PC-3 (cell line): ENCODE measurements at regions of chr10 and their contacts with region 1.

Region 1: GRCh38 chr10:69800109-69800508 is 1.6 kb upstream of the COL13A1 start:
- DNase-seq: peak; percentile 93
- ATAC-seq: peak; percentile 26
- H3K4me3 ChIP-seq: no peak overlapping the region
- H3K27ac ChIP-seq: no peak overlapping the region
- H3K4me1 ChIP-seq: peaks cover 47% of the 10 kb centered on the region
- H3K27me3 ChIP-seq: no peaks in the 10 kb centered on the region
- CTCF ChIP-seq: peak; percentile 98

Region 2: GRCh38 chr10:69515699-69516259 is 284.3 kb before region 1 on chr10:
- CTCF ChIA-PET with region 1: interaction called, 3 read pairs
- POLR2A ChIA-PET with region 1: no interaction called
- intact Hi-C with region 1: loop called (anchors 5 kb)
- DNase-seq: peak; percentile 92
- ATAC-seq: peak; percentile 96
- H3K4me3 ChIP-seq: no peak overlapping the region
- H3K27ac ChIP-seq: no peak overlapping the region
- H3K4me1 ChIP-seq: no peaks in the 10 kb centered on the region
- H3K27me3 ChIP-seq: no peaks in the 10 kb centered on the region
- CTCF ChIP-seq: peak; percentile 98

Region 3: DNA sequence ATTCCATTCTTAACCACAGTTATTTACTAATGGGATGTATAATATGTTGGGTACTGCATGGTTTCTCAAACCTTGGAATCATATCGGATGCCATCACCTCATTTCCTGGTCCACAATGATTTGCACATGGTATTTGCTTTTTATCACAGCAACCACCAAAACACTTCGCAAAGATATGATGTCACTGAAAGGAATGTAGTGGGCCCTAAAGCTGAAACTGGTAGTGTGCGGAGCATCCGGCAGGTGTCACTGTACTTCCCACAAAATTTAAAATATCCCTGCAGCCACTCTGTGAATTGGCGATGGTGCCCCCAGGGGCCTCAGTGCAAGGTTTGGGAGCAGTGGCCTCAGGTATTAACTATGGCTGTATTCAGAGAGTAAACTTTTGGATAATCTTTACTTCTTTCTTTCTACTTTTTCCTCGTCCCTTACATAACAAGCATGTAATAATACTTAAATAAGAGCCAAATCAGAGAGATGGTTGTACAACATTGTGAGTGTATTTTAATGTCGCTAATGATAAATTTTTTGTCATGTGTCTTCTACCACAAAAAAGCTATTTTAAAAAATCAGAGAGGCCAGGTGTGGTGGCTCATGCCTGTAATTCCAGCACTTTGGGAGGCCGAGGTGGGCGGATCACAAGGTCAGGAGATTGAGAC is 103.9 kb before region 1 on chr10:
- CTCF ChIA-PET with region 1: no interaction called
- POLR2A ChIA-PET with region 1: no interaction called
- intact Hi-C with region 1: loop called (anchors 1 kb)
- DNase-seq: peak; percentile 98
- ATAC-seq: peak; percentile 94
- H3K4me3 ChIP-seq: no peak overlapping the region
- H3K27ac ChIP-seq: peak overlapping the region; percentile 17
- H3K4me1 ChIP-seq: peaks cover 7% of the 10 kb centered on the region
- H3K27me3 ChIP-seq: peaks cover 17% of the 10 kb centered on the region; the same call in 1 of the 2 replicates
- CTCF ChIP-seq: peak; percentile 98

Region 4: GRCh38 chr10:69769395-69769992 is 30.6 kb before region 1 on chr10:
- CTCF ChIA-PET with region 1: interaction called, 6 read pairs
- POLR2A ChIA-PET with region 1: no interaction called
- intact Hi-C with region 1: loop called (anchors 1 kb)
- DNase-seq: peak; percentile 89
- ATAC-seq: peak; percentile 99
- H3K4me3 ChIP-seq: peak overlapping the region; percentile 45
- H3K27ac ChIP-seq: no peak overlapping the region
- H3K4me1 ChIP-seq: peaks cover 14% of the 10 kb centered on the region
- H3K27me3 ChIP-seq: no peaks in the 10 kb centered on the region
- CTCF ChIP-seq: no peak

Region 5: DNA sequence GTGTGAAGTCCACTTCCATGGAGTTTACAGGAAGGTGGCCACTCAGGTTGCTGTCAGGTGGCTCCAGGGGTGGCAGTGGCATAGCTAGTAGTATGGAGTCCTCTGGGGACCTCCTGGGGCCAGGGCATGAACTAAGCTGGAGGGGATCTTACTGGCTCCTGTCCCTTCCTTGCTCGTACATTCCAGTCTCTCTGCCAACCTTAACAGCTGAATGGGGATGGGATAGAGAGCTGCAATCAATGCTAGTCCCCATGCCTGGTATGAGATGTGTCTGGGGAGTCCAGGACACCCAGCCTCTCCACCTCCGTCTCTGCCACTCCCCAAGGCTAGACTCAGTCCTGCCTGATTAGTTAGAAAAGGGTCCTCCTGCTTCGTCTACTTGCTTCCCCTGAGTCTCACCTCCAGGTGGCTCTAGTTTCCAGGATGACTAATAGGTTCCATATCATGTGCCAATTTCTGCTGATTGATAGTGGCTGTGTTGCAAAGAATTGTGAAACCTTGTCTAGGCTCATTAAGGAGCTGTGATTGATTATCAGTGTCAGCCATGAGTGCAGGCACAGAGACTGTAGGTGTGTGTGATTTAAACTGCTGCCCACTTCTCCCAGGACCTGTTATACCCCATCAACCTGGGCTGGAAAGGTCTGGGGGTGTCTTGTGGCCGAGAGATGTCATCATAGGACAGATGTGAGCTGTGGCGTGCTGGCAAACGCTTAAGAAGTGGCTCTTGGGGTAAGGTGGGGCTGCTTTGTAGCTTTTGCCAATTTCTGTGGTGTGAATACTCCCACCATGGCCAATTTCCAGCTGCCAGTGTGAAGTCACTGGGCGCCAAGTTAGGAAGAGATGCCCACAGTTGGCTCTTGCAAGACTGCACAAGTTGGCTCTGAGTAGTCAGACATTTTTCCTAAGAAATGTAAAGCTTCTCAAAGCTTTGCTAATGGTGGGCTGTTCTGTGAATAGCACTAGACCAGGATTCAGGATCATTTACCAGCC is 61.4 kb after region 1 on chr10:
- CTCF ChIA-PET with region 1: interaction called, 5 read pairs
- POLR2A ChIA-PET with region 1: no interaction called
- intact Hi-C with region 1: loop called (anchors 1 kb)
- DNase-seq: peak; percentile 99
- ATAC-seq: peak; percentile 38
- H3K4me3 ChIP-seq: no peak overlapping the region
- H3K27ac ChIP-seq: peak overlapping the region; percentile 95
- H3K4me1 ChIP-seq: peaks cover 63% of the 10 kb centered on the region
- H3K27me3 ChIP-seq: no peaks in the 10 kb centered on the region
- CTCF ChIP-seq: peak; percentile 92

Region 6: DNA sequence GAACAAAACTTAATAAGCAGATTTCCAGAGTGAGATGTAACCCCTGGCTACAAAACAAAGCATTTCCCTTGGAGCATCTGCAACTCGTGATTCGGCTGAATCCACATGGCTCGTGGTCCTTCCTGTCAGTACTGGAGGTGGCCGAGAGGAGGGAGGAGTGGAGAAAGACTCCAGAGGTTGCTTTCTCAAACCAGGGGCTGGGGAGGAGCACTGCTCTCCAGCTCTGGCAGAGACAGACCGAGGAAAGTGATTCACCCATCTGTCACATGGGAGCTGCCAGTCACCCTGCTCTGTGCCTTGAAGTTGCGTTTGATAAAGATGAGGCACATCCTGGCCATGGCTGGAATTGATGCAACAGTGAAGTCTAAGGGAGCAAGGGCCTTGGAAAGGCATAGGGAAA is 74.3 kb after region 1 on chr10:
- CTCF ChIA-PET with region 1: interaction called, 3 read pairs
- POLR2A ChIA-PET with region 1: no interaction called
- intact Hi-C with region 1: loop called (anchors 1 kb)
- DNase-seq: peak; percentile 99
- ATAC-seq: peak; percentile 97
- H3K4me3 ChIP-seq: no peak overlapping the region
- H3K27ac ChIP-seq: peak overlapping the region; percentile 77
- H3K4me1 ChIP-seq: peaks cover 38% of the 10 kb centered on the region
- H3K27me3 ChIP-seq: no peaks in the 10 kb centered on the region
- CTCF ChIP-seq: peak; percentile 30; the same call in 1 of the 2 replicates

Region 7: DNA sequence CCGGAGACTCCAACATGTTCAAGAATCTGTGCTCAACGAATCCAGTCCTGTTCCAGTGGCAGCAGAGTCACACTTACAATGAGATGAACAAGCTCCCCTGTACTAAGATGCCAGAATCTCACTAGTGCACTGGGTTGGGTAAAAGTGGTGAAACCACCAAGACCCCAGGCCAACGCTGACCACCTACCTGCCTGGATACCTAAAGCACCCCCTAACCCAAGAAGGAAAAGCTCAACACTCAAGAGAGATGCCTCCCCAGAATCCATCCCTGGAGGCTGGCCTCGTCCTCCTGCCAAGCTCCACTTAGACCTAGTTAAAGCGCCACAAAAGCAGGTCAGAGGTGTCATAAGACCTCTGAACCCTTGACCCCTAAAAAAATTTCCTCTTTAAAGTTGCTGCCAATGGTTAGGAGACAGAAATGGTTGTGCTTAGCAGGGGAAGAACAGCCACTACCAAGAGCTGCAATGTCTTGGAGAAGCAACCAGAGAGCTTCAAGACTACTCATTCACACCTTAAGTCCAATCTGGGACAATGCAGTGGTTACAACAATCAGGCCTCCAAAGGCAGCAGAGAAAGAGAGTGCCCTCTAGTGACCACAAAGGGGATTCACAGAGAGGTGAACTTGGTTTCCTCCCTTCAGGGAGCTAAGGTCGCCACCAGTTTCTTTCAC is 157.9 kb after region 1 on chr10:
- CTCF ChIA-PET with region 1: interaction called, 5 read pairs
- POLR2A ChIA-PET with region 1: no interaction called
- intact Hi-C with region 1: loop called (anchors 1 kb)
- DNase-seq: peak; percentile 88
- ATAC-seq: peak; percentile 81
- H3K4me3 ChIP-seq: no peak overlapping the region
- H3K27ac ChIP-seq: no peak overlapping the region
- H3K4me1 ChIP-seq: no peaks in the 10 kb centered on the region
- H3K27me3 ChIP-seq: no peaks in the 10 kb centered on the region
- CTCF ChIP-seq: peak; percentile 100